Head of caudate nucleus (tissue), 42 donors: ENCODE measurements at regions of chr9 and their contacts with region 1.

Region 1: DNA sequence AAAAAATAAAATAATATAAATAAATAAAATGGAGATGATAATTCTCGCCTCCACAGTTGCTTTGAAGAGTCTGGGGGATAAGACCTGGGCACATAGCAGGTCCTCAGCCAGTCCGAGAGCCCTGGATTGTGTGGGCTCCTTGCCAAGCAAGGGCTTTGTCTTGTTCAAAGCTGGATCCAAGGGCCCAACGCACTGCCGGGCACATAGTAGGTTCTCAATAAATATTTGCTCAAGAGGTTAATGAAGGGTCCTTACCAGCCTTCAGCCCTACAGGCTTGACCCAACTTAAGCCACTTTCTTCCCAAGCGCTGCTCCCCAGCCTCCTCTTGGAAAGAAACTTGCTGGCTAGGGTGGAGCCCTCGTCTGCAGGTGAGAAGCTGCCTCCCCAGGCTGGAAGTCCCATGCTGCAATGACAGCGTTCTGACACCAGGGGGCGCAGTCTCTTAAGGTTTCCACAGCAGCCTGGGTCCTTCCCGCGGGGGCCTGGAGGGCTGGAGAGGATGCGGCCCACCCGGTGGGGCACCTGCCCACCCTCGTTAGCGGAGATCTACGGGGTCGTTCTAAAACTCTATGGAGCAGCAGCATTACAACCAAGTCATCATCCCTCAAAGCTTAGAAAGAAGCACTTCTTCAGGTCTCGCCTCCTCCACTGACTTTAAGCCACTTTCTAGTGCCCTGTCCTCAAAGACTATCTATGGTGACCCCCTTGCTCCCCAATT is 115.2 kb downstream of the LHX2 start:
- DNase-seq: peak; percentile 39 to 90 (median 75)

Region 2: GRCh38 chr9:124062172-124062571 is 64.6 kb before region 1 on chr9:
- intact Hi-C with region 1: no loop called
- DNase-seq: no peak

Region 3: GRCh38 chr9:124291801-124292396 is 165.2 kb after region 1 on chr9:
- intact Hi-C with region 1: loop called (anchors 5 kb)
- DNase-seq: peak in 31 of 42 donors; percentile 21 to 71 (median 52)

Region 4: GRCh38 chr9:124320062-124320973 is 193.6 kb after region 1 on chr9:
- intact Hi-C with region 1: loop called (anchors 5 kb)
- DNase-seq: peak; percentile 34 to 84 (median 70)